ENCODE measurements at regions of chr1 and their contacts with region 1.

Region 1: GRCh38 chr1:40143891-40144575 is 17.2 kb upstream of the RLF start:
- DNase-seq: no peak
- H3K4me3 ChIP-seq: no peak overlapping the region
- H3K27me3 ChIP-seq: peaks cover 9% of the 10 kb centered on the region
- CTCF ChIP-seq: peak; percentile 81

Region 2: DNA sequence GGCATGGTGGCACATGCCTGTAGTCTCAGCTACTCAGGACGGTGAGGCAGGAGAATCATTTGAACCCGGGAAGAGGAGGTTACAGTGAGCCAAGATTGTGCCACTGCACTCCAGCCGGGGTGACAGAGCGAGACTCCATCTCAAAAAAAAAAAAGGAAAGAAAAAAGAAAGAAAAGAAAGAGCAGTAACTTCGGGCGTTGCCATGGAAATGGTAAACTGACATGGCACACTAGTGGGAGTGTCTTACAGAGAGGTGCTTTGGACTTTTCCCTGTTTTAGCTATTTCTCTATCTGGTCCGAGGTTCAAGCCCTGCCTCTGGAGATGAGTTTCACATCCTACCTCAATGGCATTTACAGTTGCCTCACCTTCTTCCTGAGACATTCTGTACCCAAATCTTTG is 23.9 kb before region 1 on chr1:
- CTCF ChIA-PET with region 1: interaction called, 12 read pairs
- POLR2A ChIA-PET with region 1: no interaction called
- DNase-seq: no peak
- H3K4me3 ChIP-seq: no peak overlapping the region
- H3K27me3 ChIP-seq: peaks cover 14% of the 10 kb centered on the region
- CTCF ChIP-seq: no peak

Region 3: DNA sequence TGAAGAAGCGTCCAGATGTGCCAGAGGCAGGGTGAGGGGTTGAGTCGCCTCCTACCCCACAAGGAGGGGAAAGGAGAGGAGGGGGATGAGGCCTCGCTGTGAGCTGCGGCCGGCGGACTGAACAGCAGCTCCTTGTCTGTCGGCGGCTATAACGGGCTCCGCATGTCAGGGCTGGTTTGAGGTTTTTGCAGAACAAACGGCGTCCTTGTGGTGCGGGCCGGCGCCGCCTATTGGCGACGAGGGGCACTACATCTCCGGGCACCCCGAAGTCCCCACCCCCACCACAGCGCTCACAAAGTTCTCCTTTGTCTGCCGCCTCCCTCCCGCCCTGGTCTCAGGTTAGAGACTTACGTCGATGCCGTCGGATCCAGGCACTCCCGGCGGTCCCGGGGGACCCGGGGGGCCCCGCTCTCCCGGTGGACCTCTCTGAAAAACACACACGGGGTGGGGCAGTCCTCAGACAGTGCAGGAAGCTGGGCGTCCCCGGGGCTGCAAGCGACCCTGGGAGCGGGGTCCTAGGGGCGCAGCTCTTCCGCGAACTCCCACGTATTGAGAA is 171.3 kb after region 1 on chr1:
- CTCF ChIA-PET with region 1: interaction called, 31 read pairs
- POLR2A ChIA-PET with region 1: no interaction called
- DNase-seq: peak; percentile 12
- H3K4me3 ChIP-seq: peak overlapping the region; percentile 26
- H3K27me3 ChIP-seq: peaks cover 25% of the 10 kb centered on the region
- CTCF ChIP-seq: peak; percentile 96

Region 4: GRCh38 chr1:40411294-40411693 is 267.3 kb after region 1 on chr1:
- CTCF ChIA-PET with region 1: interaction called, 34 read pairs
- POLR2A ChIA-PET with region 1: no interaction called
- DNase-seq: no peak
- H3K4me3 ChIP-seq: no peak overlapping the region
- H3K27me3 ChIP-seq: no peaks in the 10 kb centered on the region
- CTCF ChIP-seq: no peak

Measured in BJ (cell line).